Mammary epithelial cell (primary cell): ENCODE measurements at regions of chr18 and their contacts with region 1.

Region 1: DNA sequence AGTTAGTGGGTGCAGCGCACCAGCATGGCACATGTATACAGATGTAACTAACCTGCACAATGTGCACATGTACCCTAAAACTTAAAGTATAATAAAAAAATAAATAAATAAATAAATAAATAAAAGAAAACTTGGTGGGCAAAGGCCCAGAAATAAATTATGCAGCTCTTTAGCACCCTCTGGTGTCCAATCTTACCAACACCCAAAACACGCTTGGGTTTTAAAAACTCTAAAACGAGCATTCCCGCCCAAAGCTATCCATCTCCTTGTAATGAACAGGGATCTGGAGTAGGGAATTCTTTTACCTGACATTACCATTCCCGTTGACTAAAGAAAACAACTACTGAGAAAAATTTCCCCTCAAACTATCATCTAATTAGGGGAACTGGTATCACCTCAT is 2005.9 kb upstream of the CELF4 start:
- DNase-seq: no peak
- H3K4me3 ChIP-seq: no peak overlapping the region
- H3K27ac ChIP-seq: no peak overlapping the region
- H3K4me1 ChIP-seq: no peaks in the 10 kb centered on the region
- H3K27me3 ChIP-seq: no peaks in the 10 kb centered on the region
- CTCF ChIP-seq: peak; percentile 12 to 47

Region 2: GRCh38 chr18:38545071-38545470 is 1026.4 kb before region 1 on chr18:
- CTCF ChIA-PET with region 1: no interaction called
- dilution Hi-C with region 1: no loop called
- in situ Hi-C with region 1: no loop called
- intact Hi-C with region 1: loop called (anchors 2 kb)
- DNase-seq: peak; percentile 77
- H3K4me3 ChIP-seq: no peak overlapping the region
- H3K27ac ChIP-seq: no peak overlapping the region
- H3K4me1 ChIP-seq: peaks cover 7% of the 10 kb centered on the region
- H3K27me3 ChIP-seq: no peaks in the 10 kb centered on the region
- CTCF ChIP-seq: peak; percentile 87 to 88

Region 3: DNA sequence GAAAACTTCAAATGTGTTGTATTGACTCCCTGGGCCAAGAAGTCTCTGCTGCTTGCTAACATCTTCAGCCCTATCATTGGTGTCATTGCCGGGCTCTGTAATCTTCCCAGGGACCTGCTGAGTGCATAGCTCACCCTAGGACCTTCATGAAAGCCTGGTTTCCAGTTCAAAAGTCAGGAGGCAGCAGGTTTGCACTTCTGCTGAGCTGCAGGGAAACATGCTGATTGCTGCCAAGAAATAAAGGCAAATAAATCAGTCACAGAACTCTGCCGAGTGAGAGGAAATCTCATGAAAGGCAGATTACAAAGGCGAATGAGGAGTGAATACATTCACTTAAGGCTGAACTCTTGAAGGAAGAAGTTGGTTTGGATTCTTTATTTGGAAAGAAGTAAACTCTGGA is 58.3 kb before region 1 on chr18:
- CTCF ChIA-PET with region 1: no interaction called
- dilution Hi-C with region 1: no loop called
- in situ Hi-C with region 1: no loop called
- intact Hi-C with region 1: no loop called
- DNase-seq: no peak
- H3K4me3 ChIP-seq: no peak overlapping the region
- H3K27ac ChIP-seq: no peak overlapping the region
- H3K4me1 ChIP-seq: no peaks in the 10 kb centered on the region
- H3K27me3 ChIP-seq: no peaks in the 10 kb centered on the region
- CTCF ChIP-seq: no peak